Mammary epithelial cell (primary cell): ENCODE measurements at regions of chr6 and their contacts with region 1.

Region 1: GRCh38 chr6:39870950-39871349 is 63.3 kb downstream of the MOCS1 start:
- DNase-seq: no peak
- H3K4me3 ChIP-seq: no peak overlapping the region
- H3K27ac ChIP-seq: no peak overlapping the region
- H3K4me1 ChIP-seq: no peaks in the 10 kb centered on the region
- H3K27me3 ChIP-seq: no peaks in the 10 kb centered on the region
- CTCF ChIP-seq: peak in 1 of 2 donors; percentile 9

Region 2: GRCh38 chr6:39909661-39910060 is 38.7 kb after region 1 on chr6:
- CTCF ChIA-PET with region 1: no interaction called
- dilution Hi-C with region 1: loop called (anchors 5 kb)
- in situ Hi-C with region 1: no loop called
- intact Hi-C with region 1: no loop called
- DNase-seq: no peak
- H3K4me3 ChIP-seq: no peak overlapping the region
- H3K27ac ChIP-seq: no peak overlapping the region
- H3K4me1 ChIP-seq: no peaks in the 10 kb centered on the region
- H3K27me3 ChIP-seq: no peaks in the 10 kb centered on the region
- CTCF ChIP-seq: no peak